ENCODE measurements at regions of chr7 and their contacts with region 1.

Region 1: DNA sequence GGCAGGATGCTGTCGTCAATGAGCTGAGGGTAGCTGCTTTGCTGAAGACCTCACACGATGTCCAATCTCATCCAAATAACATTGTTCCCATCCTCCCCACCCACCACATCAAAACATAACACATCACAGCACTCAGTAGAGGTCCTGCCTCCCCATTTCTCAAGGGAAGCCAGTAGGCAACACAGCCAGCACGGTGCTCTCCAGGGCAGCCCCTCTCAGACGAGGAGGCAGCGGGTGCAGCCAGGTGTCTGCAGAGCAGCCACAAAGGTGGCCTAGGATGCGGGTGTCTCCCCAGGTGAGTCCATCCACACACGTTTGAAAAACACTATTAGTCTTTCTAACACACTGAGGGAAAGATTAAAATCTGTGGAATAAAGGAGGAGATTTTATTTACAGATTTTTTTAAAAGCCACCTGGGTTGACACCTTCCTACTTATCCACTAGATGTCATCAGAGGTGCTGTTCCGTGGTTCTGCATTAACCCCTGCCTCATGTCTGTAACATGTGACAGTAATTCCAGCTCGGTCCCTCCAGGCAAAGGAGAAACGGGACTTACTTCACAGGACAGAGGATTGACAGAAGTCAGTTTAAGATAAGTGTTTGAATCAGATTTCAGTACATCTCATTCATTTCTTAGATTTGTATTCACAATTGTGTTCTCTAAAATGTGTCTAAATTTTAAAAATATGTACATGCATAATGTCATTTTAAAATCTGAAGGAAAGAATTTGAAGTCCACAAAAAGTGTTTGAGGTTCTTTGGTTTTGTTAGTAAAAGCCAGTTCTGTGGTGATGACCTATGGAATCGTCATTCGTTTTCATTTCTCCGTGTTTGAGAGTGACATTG is 68.0 kb downstream of the LANCL2 start:
- DNase-seq: no peak
- H3K4me3 Mint-ChIP-seq: no peak overlapping the region
- H3K27ac Mint-ChIP-seq: peak overlapping the region; percentile 27
- H3K4me1 Mint-ChIP-seq: peaks cover 34% of the 10 kb centered on the region
- H3K27me3 Mint-ChIP-seq: no peaks in the 10 kb centered on the region

Region 2: GRCh38 chr7:55483046-55483445 is 49.9 kb after region 1 on chr7:
- intact Hi-C with region 1: loop called (anchors 5 kb)
- DNase-seq: no peak
- H3K4me3 Mint-ChIP-seq: no peak overlapping the region
- H3K27ac Mint-ChIP-seq: no peak overlapping the region
- H3K4me1 Mint-ChIP-seq: peaks cover 62% of the 10 kb centered on the region
- H3K27me3 Mint-ChIP-seq: no peaks in the 10 kb centered on the region

Region 3: DNA sequence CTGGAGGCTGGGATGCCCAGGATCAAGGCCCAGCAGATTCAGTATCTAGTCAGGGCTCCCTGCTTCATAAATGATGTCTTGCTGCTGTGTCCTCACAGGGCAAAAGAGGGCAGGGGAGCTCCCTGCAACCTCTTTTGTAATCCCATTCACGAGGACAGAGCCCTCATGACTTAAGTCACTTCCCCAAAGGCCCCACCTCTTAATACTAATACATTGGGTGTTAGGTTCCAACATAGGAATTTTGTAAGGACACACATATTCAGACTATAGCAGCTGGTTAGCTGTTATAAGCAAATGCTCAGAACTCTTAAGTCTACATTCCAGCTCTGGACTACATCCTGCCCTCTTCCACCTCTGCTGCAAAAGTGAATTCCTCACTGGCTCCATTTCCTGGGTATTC is 76.2 kb after region 1 on chr7:
- intact Hi-C with region 1: loop called (anchors 5 kb)
- DNase-seq: no peak
- H3K4me3 Mint-ChIP-seq: no peak overlapping the region
- H3K27ac Mint-ChIP-seq: peak overlapping the region; percentile 64
- H3K4me1 Mint-ChIP-seq: peaks cover 76% of the 10 kb centered on the region
- H3K27me3 Mint-ChIP-seq: no peaks in the 10 kb centered on the region

Region 4: GRCh38 chr7:55593515-55594318 is 160.6 kb after region 1 on chr7:
- intact Hi-C with region 1: loop called (anchors 1 kb)
- DNase-seq: peak; percentile 48
- H3K4me3 Mint-ChIP-seq: no peak overlapping the region
- H3K27ac Mint-ChIP-seq: no peak overlapping the region
- H3K4me1 Mint-ChIP-seq: peaks cover 32% of the 10 kb centered on the region
- H3K27me3 Mint-ChIP-seq: peaks cover 4% of the 10 kb centered on the region

Region 5: DNA sequence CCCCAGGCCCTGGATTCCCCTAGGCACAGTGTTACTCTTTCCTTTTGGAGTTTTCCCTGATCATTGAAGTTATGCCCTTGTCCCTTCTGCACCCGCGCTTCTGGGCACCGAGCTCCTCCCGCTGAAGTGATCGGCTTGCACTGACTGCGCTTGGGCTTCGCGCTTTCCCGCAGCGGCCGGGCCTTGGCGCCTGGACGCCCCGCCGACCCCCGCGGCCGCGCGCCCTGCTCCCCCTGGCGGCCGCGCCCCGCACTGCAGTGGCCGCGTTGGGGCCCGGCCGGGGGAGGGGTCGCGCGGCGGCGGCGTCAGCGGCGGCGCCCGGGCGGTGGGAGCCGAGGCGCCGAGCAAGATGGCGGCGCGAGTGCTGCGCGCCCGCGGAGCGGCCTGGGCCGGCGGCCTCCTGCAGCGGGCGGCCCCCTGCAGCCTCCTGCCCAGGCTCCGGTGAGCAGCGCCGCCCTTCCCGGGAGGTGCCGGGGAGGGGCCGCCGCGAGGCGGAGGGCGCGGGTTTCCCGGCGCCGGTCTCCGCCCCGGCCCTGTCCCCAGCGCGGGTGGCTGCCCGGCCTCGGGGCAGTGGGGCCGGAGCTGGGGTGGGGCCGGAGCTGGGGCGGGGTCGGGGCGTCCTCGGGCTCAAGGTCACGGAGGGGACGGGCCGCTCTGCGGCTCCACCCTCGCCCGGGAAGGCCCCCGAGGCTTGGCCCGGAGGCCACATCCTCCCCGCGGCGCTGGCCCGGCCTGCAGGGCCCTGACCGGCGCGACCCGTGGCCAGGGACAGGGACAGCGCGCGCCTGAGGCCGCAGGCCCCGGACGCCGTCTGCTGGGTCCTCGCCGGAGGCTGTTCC is 531.3 kb after region 1 on chr7 and contains the start of gene NIPSNAP2:
- intact Hi-C with region 1: loop called (anchors 10 kb)
- DNase-seq: peak; percentile 55
- H3K4me3 Mint-ChIP-seq: peak within 1 kb of the TSS; percentile 88
- H3K27ac Mint-ChIP-seq: peak within 1 kb of the TSS; percentile 89
- H3K4me1 Mint-ChIP-seq: peaks cover 26% of the 10 kb centered on the region
- H3K27me3 Mint-ChIP-seq: no peaks in the 10 kb centered on the region
- total RNA-seq, gene NIPSNAP2: 49.4 and 50.0 TPM in 2 replicates

Measured in activated T-helper 1 cell treated with anti-CD3 and anti-CD28 coated beads, Interleukin-12 subunit alpha, Interleukin-12 subunit beta, Interleukin-2, Interleukin-4 antibody, amounts not matched to agents 30 ng/mL and 10 ng/mL and 1 ng/mL, durations not matched to agents 14 hours and 24 hours and 36 hours (primary cell).